ENCODE measurements at regions of chrX and their contacts with region 1.

Region 1: GRCh38 chrX:6890544-6891261 is 256.8 kb upstream of the STS start:
- DNase-seq: no peak
- H3K4me3 ChIP-seq: no peak overlapping the region
- H3K27ac ChIP-seq: no peak overlapping the region
- H3K4me1 ChIP-seq: no peaks in the 10 kb centered on the region
- H3K27me3 ChIP-seq: no peaks in the 10 kb centered on the region
- CTCF ChIP-seq: no peak
- POLR2A ChIP-seq: no peak

Region 2: DNA sequence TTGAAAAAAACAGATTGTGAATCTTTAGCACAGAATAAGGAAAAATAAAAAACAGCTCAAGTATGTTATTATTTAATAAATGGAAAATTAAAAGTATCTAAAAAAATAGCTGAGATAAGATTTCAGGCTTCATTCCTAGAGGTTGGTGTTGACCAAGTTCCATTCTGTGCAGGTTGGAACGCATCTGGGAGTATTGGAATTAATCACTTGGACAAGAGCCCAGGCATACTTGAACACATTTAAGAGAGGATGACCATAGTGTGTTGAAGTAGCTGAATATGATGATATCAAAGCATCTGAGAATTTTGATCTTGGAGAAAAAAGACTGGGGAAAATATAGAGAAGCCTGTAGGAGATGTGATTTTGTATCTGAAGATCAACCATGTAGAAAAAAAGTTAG is 897.6 kb after region 1 on chrX:
- intact Hi-C with region 1: loop called (anchors 10 kb)
- DNase-seq: no peak
- H3K4me3 ChIP-seq: no peak overlapping the region
- H3K27ac ChIP-seq: no peak overlapping the region
- H3K4me1 ChIP-seq: no peaks in the 10 kb centered on the region
- H3K27me3 ChIP-seq: no peaks in the 10 kb centered on the region
- CTCF ChIP-seq: no peak
- POLR2A ChIP-seq: no peak

Measured in breast epithelium (tissue), 4 donors.